ENCODE measurements at regions of chr3 and their contacts with region 1.

Region 1: DNA sequence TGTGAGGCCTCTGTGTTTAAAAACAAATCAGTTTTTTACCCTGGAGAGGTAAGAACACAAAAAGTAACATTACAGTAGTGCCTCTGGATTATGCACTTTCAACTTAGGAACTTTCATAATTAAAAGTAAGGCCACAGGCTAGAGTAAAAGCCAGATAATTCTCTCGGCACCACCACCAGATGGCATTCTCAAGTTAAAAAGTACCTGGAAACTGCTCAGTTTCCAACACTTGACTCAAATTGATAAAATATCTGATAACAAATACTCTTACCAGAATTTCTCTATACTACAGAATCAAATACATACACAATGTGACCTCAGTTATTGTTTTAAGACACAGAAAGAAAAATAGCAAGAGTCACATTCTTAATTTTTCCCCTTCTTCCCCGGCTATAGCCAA is 19.9 kb downstream of the SPICE1 start:
- DNase-seq: peak in 1 of 2 experiments; percentile 55
- ATAC-seq: peak; percentile 64 to 76; a peak in 4 of 6 replicates
- H3K4me3 ChIP-seq: no peak overlapping the region
- H3K27ac ChIP-seq: no peak overlapping the region
- H3K4me1 ChIP-seq: peaks cover 22% of the 10 kb centered on the region
- CTCF ChIP-seq: peak; percentile 75
- EP300 ChIP-seq: no peak
- POLR2A ChIP-seq: no peak
- RAD21 ChIP-seq: peak; percentile 57 to 69

Region 2: GRCh38 chr3:113514265-113514769 is 19.3 kb after region 1 on chr3:
- CTCF ChIA-PET with region 1: interaction called, 42 read pairs
- POLR2A ChIA-PET with region 1: interaction called, 38 read pairs
- DNase-seq: no peak
- ATAC-seq: no peak; a peak in 3 of 6 replicates
- H3K4me3 ChIP-seq: peak overlapping the region; percentile 81
- H3K27ac ChIP-seq: peak overlapping the region; percentile 89 to 97
- H3K4me1 ChIP-seq: peaks cover 12% of the 10 kb centered on the region; the same call in 2 of the 3 replicates
- CTCF ChIP-seq: no peak
- EP300 ChIP-seq: no peak
- POLR2A ChIP-seq: no peak
- RAD21 ChIP-seq: no peak

Region 3: GRCh38 chr3:113535898-113536297 is 40.9 kb after region 1 on chr3:
- CTCF ChIA-PET with region 1: interaction called, 12 read pairs
- POLR2A ChIA-PET with region 1: no interaction called
- DNase-seq: peak in 1 of 2 experiments; percentile 41
- ATAC-seq: peak; percentile 57 to 66
- H3K4me3 ChIP-seq: no peak overlapping the region
- H3K27ac ChIP-seq: peak overlapping the region; percentile 71 to 75
- H3K4me1 ChIP-seq: peaks cover 29% of the 10 kb centered on the region
- CTCF ChIP-seq: 0 out of 3 replicates have a peak, but pooled peaks have one; percentile 13
- EP300 ChIP-seq: no peak
- POLR2A ChIP-seq: no peak
- RAD21 ChIP-seq: no peak

Region 4: GRCh38 chr3:113552851-113553250 is 57.8 kb after region 1 on chr3:
- CTCF ChIA-PET with region 1: interaction called, 10 read pairs
- POLR2A ChIA-PET with region 1: no interaction called
- DNase-seq: no peak
- ATAC-seq: peak; percentile 45 to 55; a peak in 3 of 6 replicates
- H3K4me3 ChIP-seq: no peak overlapping the region
- H3K27ac ChIP-seq: no peak overlapping the region
- H3K4me1 ChIP-seq: peaks cover 16% of the 10 kb centered on the region
- CTCF ChIP-seq: peak; percentile 25; the same call in 2 of the 3 replicates
- EP300 ChIP-seq: no peak
- POLR2A ChIP-seq: no peak
- RAD21 ChIP-seq: peak; percentile 46 to 50; a peak in 3 of 5 replicates

Region 5: DNA sequence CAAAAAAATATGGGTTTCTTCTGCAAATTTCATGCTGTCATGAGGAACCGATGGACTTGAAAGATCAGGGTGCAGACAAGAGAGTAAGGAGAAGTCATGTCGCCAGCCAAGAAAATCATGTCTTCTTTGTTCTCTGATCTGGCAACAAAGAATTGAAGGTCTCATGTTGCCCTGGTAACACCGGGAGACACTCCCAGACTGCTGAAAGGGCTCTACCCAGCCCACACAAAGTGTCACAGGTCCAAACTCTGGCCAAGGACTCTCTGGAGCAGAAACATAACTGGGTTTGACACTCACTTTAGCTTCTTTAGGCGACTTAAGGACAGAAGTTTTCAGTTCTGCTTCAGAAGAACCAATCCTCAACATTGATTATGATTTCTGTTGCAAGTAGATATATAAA is 80.2 kb after region 1 on chr3:
- CTCF ChIA-PET with region 1: interaction called, 62 read pairs
- POLR2A ChIA-PET with region 1: no interaction called
- DNase-seq: peak in 1 of 2 experiments; percentile 59
- ATAC-seq: peak in 1 of 2 experiments; percentile 51; a peak in 3 of 6 replicates
- H3K4me3 ChIP-seq: no peak overlapping the region
- H3K27ac ChIP-seq: peak overlapping the region in 1 of 2 experiments; percentile 44; a peak in 1 of 6 replicates
- H3K4me1 ChIP-seq: peaks cover 25% of the 10 kb centered on the region
- CTCF ChIP-seq: no peak
- EP300 ChIP-seq: no peak
- POLR2A ChIP-seq: no peak
- RAD21 ChIP-seq: no peak

Region 6: DNA sequence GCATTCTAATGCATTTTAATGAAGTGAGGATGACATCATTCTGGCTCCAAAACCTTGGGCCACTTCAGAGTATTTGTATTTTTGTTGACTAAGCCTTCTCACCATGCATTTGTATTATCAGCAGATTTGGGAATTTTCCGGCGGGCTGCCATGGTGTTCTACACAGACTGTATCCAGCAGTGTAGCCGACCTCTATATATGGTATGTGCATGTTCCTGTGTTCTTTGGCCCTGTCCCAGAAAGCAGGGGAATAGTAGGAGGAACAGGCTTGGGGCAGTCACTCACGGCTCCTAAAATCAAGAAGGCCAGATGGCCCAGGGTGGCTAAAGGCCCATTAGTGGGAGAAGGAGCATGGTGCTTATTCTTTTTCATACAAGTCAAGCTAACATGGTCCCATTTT is 120.9 kb after region 1 on chr3:
- CTCF ChIA-PET with region 1: interaction called, 13 read pairs
- POLR2A ChIA-PET with region 1: no interaction called
- DNase-seq: no peak
- ATAC-seq: no peak
- H3K4me3 ChIP-seq: no peak overlapping the region
- H3K27ac ChIP-seq: no peak overlapping the region
- H3K4me1 ChIP-seq: no peaks in the 10 kb centered on the region
- CTCF ChIP-seq: no peak
- EP300 ChIP-seq: no peak
- POLR2A ChIP-seq: no peak
- RAD21 ChIP-seq: no peak

Region 7: GRCh38 chr3:113626503-113627371 is 131.7 kb after region 1 on chr3:
- CTCF ChIA-PET with region 1: interaction called, 35 read pairs
- POLR2A ChIA-PET with region 1: no interaction called
- DNase-seq: peak; percentile 72 to 82
- ATAC-seq: peak; percentile 94 to 99
- H3K4me3 ChIP-seq: no peak overlapping the region
- H3K27ac ChIP-seq: no peak overlapping the region
- H3K4me1 ChIP-seq: no peaks in the 10 kb centered on the region
- CTCF ChIP-seq: peak; percentile 98
- EP300 ChIP-seq: no peak
- POLR2A ChIP-seq: no peak
- RAD21 ChIP-seq: peak; percentile 97